HEK293 (cell line): ENCODE measurements at regions of chr2 and their contacts with region 1.

Region 1: DNA sequence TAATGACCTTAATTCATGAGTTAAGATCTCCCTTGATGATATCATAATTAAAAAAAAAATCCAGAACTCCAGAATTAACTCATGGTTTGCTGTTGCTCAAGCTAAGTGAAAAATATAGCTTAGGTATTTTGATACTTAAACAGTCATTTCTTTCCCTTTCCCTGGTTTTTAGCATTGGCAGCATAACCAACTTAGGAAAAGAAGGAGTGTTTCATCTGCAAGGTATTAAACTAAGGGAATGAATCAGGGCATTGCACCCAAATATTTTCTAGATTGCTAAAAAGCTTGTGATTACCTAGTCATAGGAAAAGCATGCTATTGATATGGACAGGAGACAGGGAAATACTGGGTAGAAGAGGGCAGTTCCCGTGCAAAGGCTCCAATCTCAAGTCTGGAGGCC is 207.2 kb downstream of the LRP1B start:
- H3K4me3 ChIP-seq: no peak overlapping the region
- H3K27ac ChIP-seq: no peak overlapping the region
- H3K4me1 ChIP-seq: 0 out of 2 replicates have a peak, but pooled peaks cover 2% of the 10 kb centered on the region
- CTCF ChIP-seq: no peak

Region 2: DNA sequence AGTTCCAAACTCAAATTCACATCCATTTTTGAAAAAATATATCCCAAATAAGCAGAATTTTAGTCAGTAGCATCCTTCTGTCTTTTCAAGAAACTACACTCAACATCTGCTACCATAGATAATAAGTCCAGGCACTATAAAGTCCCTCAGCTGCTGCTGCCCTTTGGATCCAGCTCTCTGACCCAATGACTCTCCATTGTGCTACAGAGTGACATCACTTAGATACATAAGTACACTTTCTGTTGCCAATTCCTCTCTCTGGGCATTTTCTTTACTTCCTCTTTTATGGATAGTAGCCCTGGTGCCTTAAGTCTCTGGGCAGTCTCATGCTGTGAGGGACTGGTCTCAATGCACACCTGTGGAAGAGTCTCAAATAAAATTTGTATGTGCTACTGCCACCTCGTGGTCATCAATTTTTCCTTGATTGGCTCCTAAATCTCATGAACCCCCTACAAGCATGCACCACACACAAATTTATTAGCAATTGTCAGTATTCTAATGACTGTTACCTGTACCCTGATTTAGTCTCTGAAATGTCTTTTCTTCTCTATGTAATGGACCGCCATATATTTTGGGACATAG is 12.1 kb before region 1 on chr2:
- CTCF ChIA-PET with region 1: interaction called, 12 read pairs
- POLR2A ChIA-PET with region 1: no interaction called
- H3K4me3 ChIP-seq: no peak overlapping the region
- H3K27ac ChIP-seq: no peak overlapping the region
- H3K4me1 ChIP-seq: no peaks in the 10 kb centered on the region
- CTCF ChIP-seq: 0 out of 2 replicates have a peak, but pooled peaks have one; percentile 7